ENCODE measurements at regions of chr2 and their contacts with region 1.

Region 1: GRCh38 chr2:84495539-84496146 is 20.7 kb upstream of the DNAH6 start:
- DNase-seq: no peak
- H3K4me3 ChIP-seq: no peak overlapping the region
- H3K27ac ChIP-seq: no peak overlapping the region
- H3K4me1 ChIP-seq: no peaks in the 10 kb centered on the region
- H3K27me3 ChIP-seq: peaks cover 6% of the 10 kb centered on the region
- CTCF ChIP-seq: peak; percentile 78

Region 2: GRCh38 chr2:84362541-84362940 is 133.1 kb before region 1 on chr2:
- intact Hi-C with region 1: no loop called
- DNase-seq: no peak
- H3K4me3 ChIP-seq: no peak overlapping the region
- H3K27ac ChIP-seq: no peak overlapping the region
- H3K4me1 ChIP-seq: no peaks in the 10 kb centered on the region
- H3K27me3 ChIP-seq: no peaks in the 10 kb centered on the region
- CTCF ChIP-seq: no peak

Region 3: GRCh38 chr2:84619794-84620371 is 124.2 kb after region 1 on chr2:
- intact Hi-C with region 1: loop called (anchors 10 kb)
- DNase-seq: no peak
- H3K4me3 ChIP-seq: no peak overlapping the region
- H3K27ac ChIP-seq: no peak overlapping the region
- H3K4me1 ChIP-seq: no peaks in the 10 kb centered on the region
- H3K27me3 ChIP-seq: no peaks in the 10 kb centered on the region
- CTCF ChIP-seq: no peak

Region 4: DNA sequence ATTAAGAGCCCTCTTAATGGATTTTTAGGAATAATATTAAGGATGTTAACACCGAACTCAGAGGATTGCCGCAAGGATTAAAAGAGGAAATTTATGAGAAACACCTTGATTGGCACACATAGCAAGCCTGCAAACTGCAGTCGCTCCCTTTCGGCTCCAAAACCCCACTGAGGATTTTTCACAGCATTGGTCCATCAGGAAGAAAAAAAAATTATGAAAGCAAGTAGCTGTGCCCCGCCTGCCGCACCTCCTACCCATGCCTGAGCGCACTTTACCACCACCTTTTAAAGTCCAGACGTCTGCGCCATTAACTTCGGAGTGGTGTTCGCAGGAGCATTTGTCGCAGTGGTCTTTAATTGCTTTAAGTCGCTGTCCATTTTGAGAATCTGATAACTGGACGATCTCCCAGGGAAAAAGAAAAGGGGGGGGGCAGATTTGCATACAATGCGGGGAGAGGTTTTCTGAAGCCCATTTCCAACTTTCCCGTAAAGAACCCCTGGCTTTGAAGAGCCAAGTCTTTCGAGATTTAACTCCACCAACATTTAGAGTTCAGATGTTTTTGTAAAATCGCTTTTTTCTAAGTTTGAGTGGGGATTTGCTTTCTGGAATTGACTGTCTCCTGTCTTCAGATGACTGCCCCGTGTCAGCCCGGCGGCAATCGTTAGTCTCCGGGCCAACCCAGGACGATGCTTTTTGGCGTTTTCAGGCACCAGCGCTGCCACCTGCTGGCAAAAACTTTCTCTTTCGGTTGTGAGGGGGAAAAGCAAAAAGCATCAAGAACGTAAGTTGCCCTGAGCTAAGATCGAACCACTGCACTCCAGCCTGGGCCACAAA is 386.2 kb after region 1 on chr2:
- intact Hi-C with region 1: loop called (anchors 5 kb)
- DNase-seq: peak; percentile 72
- H3K4me3 ChIP-seq: peak overlapping the region; percentile 70
- H3K27ac ChIP-seq: peak overlapping the region; percentile 18
- H3K4me1 ChIP-seq: peaks cover 26% of the 10 kb centered on the region
- H3K27me3 ChIP-seq: peaks cover 57% of the 10 kb centered on the region
- CTCF ChIP-seq: peak; percentile 80